ENCODE measurements at regions of chr17 and their contacts with region 1.

Region 1: GRCh38 chr17:9676742-9677387 is 31.5 kb downstream of the USP43 start:
- ATAC-seq: peak in 3 of 8 experiments; percentile 29 to 57 (median 39)
- H3K4me3 ChIP-seq: no peak overlapping the region
- H3K27ac ChIP-seq: no peak overlapping the region
- H3K4me1 ChIP-seq: no peaks in the 10 kb centered on the region

Region 2: DNA sequence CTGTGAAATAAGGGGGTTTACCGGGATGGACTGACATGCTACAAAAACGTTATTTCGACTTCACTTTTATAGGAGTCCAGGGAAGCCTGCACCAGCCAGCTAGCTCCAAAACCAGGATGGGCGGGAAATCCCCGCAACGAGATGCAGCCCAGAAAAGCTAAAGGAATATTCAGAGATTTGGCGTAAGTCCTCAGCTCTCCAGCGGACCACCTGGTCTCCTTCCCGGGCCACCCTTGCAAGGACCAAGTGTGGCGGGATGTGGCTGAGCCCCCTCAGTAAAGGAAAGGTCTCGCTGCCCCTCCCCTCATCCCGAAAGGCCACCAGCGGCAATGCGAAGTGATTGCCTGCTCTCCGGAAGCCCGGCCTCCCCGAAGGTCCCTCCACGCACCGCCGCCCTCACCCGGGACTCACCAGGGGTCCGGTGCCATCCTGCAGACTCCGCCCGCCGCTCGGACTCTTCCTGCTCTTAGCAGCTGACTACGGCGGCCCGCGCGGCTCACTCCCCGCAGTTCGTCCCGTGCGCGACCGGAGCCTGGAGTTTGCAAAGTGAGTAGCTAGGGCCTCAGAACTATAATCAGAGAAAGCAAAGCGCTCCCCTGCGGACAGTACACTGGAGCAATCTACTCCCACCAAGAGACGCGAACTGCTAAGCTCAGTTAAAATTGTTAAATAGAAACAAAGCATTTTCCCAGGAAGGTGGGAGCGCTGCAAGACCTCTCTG is 101.3 kb before region 1 on chr17 and contains the start of gene STX8:
- in situ Hi-C with region 1: loop called in 2 of 9 experiments (anchors 25 kb)
- ATAC-seq: peak; percentile 74 to 88 (median 84)
- H3K4me3 ChIP-seq: peak within 1 kb of the TSS; percentile 72 to 93 (median 78)
- H3K27ac ChIP-seq: peak within 1 kb of the TSS in 1 of 2 donors; percentile 9
- H3K4me1 ChIP-seq: peaks cover 2 to 5% of the 10 kb centered on the region in 2 donors
- total RNA-seq, gene STX8: 44.1 to 98.1 (median 63.8) TPM

Region 3: GRCh38 chr17:9776911-9777310 is 100.0 kb after region 1 on chr17:
- in situ Hi-C with region 1: no loop called
- ATAC-seq: no peak
- H3K4me3 ChIP-seq: no peak overlapping the region
- H3K27ac ChIP-seq: no peak overlapping the region
- H3K4me1 ChIP-seq: no peaks in the 10 kb centered on the region